H1 (cell line): ENCODE measurements at regions of chr5 and their contacts with region 1.

Region 1: GRCh38 chr5:80255732-80256479 is at the start of gene SERINC5:
- DNase-seq: peak in 1 of 2 experiments; percentile 85
- H3K4me3 ChIP-seq: peak within 1 kb of the TSS; percentile 82 to 97 (median 92)
- H3K27ac ChIP-seq: peak within 1 kb of the TSS; percentile 92
- H3K4me1 ChIP-seq: peaks cover 7 to 26% (median 22%) of the 10 kb centered on the region in 4 experiments
- H3K27me3 ChIP-seq: no peaks in the 10 kb centered on the region
- CTCF ChIP-seq: peak in 1 of 3 experiments; percentile 6; a peak in 1 of 4 replicates
- EP300 ChIP-seq: no peak
- POLR2A ChIP-seq: peak; percentile 84 to 95
- RAD21 ChIP-seq: no peak
- total RNA-seq, gene SERINC5: 144 and 149 TPM in 2 replicates

Region 2: DNA sequence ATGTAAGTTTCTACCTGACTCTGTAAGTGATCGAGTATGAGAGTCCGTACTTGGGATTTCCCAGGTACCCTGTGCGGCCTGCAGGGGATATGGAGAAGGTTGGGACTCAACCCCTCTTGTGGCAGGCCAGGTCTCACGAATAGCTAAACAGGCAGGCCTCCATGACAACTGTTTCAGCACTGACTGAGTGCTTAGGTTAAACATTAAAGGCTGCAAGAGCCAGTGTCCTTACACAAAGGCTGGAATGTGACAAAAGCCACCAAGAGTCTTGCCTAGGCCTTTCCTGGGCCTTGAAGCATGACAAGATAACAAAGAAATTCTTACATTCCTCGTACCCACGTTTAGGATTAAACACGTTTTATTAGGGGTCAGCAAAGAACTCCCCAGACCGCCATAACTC is 162.1 kb before region 1 on chr5:
- CTCF ChIA-PET with region 1: interaction called, 16 read pairs
- POLR2A ChIA-PET with region 1: interaction called, 28 read pairs
- DNase-seq: no peak
- H3K4me3 ChIP-seq: no peak overlapping the region
- H3K27ac ChIP-seq: no peak overlapping the region
- H3K4me1 ChIP-seq: peaks cover 5 to 12% (median 8%) of the 10 kb centered on the region in 4 experiments
- H3K27me3 ChIP-seq: no peaks in the 10 kb centered on the region
- CTCF ChIP-seq: peak in 2 of 3 experiments; percentile 7 to 11; a peak in 2 of 4 replicates
- EP300 ChIP-seq: no peak
- POLR2A ChIP-seq: no peak
- RAD21 ChIP-seq: peak in 1 of 2 experiments; percentile 35; a peak in 2 of 4 replicates

Region 3: GRCh38 chr5:80141147-80141671 is 114.7 kb before region 1 on chr5:
- CTCF ChIA-PET with region 1: interaction called, 5 read pairs
- POLR2A ChIA-PET with region 1: interaction called, 11 read pairs
- DNase-seq: peak; percentile 61 to 71
- H3K4me3 ChIP-seq: peak overlapping the region in 1 of 4 experiments; percentile 23; a peak in 2 of 8 replicates
- H3K27ac ChIP-seq: peak overlapping the region; percentile 85
- H3K4me1 ChIP-seq: peaks cover 16 to 33% (median 26%) of the 10 kb centered on the region in 4 experiments
- H3K27me3 ChIP-seq: no peaks in the 10 kb centered on the region
- CTCF ChIP-seq: no peak
- EP300 ChIP-seq: no peak
- POLR2A ChIP-seq: peak in 1 of 2 experiments; percentile 60; a peak in 1 of 3 replicates
- RAD21 ChIP-seq: peak; percentile 3 to 25; a peak in 2 of 4 replicates

Region 4: DNA sequence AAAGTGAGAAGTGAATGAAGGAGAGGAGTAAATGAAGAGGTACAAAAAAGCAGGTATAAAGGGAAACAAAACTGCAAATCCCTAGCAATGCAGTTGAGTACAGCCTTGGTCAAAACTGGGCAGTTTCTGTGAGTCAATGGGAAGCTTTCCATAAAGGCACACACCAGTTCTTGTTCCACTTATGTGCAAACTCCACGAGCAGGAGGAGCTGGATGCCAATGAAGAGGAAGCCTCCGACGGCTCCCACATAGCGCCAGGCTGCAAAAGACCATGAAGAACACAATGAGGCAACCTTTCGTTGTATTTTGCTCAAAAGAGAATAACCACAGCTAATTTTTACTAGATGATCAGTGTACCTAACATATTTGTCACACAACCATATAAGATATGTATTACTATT is 81.1 kb before region 1 on chr5:
- CTCF ChIA-PET with region 1: interaction called, 4 read pairs
- POLR2A ChIA-PET with region 1: interaction called, 113 read pairs
- DNase-seq: no peak
- H3K4me3 ChIP-seq: no peak overlapping the region
- H3K27ac ChIP-seq: no peak overlapping the region
- H3K4me1 ChIP-seq: peaks cover 0 to 9% (median 4%) of the 10 kb centered on the region in 4 experiments; a peak in 5 of 7 replicates
- H3K27me3 ChIP-seq: no peaks in the 10 kb centered on the region
- CTCF ChIP-seq: no peak
- EP300 ChIP-seq: no peak
- POLR2A ChIP-seq: no peak
- RAD21 ChIP-seq: no peak

Region 5: DNA sequence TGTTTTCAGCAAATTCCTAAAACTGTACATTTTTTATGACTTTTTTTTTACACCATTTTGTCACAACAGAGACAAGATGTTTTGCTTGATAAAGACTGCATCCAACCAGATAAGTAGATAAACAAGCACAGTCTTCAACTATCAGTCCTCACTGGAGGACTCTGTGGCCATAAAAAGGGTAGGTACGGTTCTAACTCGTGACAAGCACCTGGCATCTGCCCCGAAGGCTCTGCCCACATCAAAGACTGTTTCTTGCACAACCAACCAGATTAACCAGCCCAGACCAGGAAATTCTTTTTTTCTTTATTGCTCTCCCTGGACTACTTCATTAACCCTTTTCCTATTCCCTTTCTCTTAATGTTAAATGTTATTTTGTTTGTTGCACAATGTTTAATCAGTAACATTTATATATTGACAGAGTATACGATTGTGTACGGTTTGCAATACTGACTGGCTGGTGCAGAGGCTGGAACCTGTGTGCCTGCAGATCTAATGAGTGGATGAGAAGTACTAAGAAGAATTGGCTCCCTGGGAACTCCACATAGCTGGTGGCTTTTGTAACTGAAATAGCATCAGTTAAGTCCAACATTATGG is 74.2 kb before region 1 on chr5:
- CTCF ChIA-PET with region 1: interaction called, 4 read pairs
- POLR2A ChIA-PET with region 1: interaction called, 113 read pairs
- DNase-seq: no peak
- H3K4me3 ChIP-seq: no peak overlapping the region
- H3K27ac ChIP-seq: peak overlapping the region; percentile 39; the same call in 1 of the 2 replicates
- H3K4me1 ChIP-seq: peaks cover 21 to 41% (median 32%) of the 10 kb centered on the region in 4 experiments
- H3K27me3 ChIP-seq: no peaks in the 10 kb centered on the region
- CTCF ChIP-seq: no peak
- EP300 ChIP-seq: no peak
- POLR2A ChIP-seq: no peak
- RAD21 ChIP-seq: no peak

Region 6: DNA sequence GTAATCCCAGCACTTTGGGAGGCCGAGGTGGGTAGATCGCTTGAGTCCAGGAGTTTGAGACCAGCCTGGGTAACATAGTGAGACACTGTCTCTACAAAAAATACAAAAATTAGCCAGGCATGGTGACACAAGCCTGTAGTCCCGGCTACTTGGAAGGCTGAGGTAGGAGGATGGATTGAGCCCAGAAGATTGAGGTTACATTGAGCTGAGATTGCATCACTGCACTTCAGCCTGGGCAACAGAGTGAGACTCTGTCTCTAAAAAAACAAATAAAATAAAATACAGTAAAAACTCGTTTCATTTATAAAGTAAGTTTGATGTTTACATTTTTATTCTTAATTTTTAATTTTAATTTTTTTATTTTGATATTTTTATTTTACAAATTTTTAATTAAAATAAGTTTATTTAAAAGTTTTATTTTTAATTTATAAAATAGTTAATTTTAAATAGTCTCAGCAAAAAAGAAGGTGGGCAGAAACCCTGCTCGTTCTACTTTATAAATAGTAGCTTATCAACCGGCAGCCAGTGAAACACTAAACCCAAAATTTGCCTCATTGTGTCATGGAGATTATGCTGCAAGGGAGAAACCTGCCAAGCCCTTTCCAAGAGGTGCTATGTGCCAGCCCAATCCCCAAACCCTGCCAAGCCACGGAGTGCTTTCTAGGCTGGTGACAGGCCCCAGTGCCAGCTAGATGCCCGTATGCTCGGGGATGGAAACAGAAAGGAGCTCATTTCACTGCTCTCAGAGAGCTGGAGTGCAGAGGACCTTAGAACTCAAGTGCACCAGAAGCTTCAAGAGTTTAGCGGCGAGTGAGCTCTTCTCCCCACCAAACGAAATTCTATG is 38.9 kb before region 1 on chr5:
- CTCF ChIA-PET with region 1: no interaction called
- POLR2A ChIA-PET with region 1: interaction called, 44 read pairs
- DNase-seq: no peak
- H3K4me3 ChIP-seq: no peak overlapping the region
- H3K27ac ChIP-seq: no peak overlapping the region
- H3K4me1 ChIP-seq: peaks cover 6 to 19% (median 9%) of the 10 kb centered on the region in 4 experiments
- H3K27me3 ChIP-seq: no peaks in the 10 kb centered on the region
- CTCF ChIP-seq: no peak
- EP300 ChIP-seq: no peak
- POLR2A ChIP-seq: no peak
- RAD21 ChIP-seq: no peak

Region 7: GRCh38 chr5:80268916-80269315 is 13.0 kb after region 1 on chr5:
- CTCF ChIA-PET with region 1: interaction called, 7 read pairs
- POLR2A ChIA-PET with region 1: interaction called, 45 read pairs
- DNase-seq: no peak
- H3K4me3 ChIP-seq: no peak overlapping the region
- H3K27ac ChIP-seq: no peak overlapping the region
- H3K4me1 ChIP-seq: 0 out of 7 replicates have a peak, but pooled peaks cover 0 to 4% (median 0%) of the 10 kb centered on the region in 4 experiments
- H3K27me3 ChIP-seq: no peaks in the 10 kb centered on the region
- CTCF ChIP-seq: no peak
- EP300 ChIP-seq: no peak
- POLR2A ChIP-seq: no peak
- RAD21 ChIP-seq: no peak